Calu3 (cell line): ENCODE measurements at regions of chr6 and their contacts with region 1.

Region 1: DNA sequence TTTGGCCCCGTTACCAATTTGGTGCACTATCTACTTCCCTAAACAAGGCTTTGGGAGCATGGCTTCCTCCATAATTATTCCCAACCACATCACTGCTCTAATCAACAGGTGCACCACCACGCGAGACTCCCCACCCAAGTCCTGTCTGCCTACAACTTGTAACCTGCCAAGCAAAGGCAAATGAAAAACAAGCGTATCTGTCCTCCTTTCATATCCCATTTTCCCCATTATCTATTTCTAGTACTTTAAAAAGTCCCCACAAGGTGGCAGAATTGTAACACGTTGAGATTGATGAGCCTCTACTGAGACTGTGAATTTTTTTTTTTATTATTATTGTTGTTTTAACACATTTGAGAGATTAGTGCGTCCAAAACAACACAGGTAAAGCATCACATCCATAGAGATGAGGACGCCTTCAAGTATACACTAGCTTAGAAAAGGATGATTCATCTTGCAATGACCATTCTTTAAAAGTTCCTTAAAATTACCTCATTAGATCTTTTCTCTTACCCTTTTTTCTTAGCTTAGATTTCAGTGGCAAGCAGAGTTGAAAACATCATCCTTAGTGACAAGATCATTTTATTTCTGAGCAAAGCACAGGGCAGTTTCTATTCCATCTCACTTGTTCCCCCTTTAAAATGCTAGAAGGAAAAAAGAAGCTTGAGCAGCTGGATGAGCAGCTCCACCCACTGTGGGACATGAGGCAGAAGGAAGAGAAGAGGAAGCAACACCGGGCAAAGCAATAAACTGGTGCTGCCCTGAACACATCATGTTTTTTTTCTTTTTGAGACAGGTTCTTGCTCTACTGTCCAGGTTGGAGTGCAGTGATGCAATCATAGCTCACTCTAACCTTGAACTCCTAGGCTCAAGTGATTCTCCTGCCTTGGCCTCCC is 210.8 kb downstream of the ARHGAP18 start:
- DNase-seq: peak; percentile 43
- H3K4me3 Mint-ChIP-seq: peak overlapping the region; percentile 61
- H3K27ac Mint-ChIP-seq: peak overlapping the region; percentile 89
- H3K4me1 Mint-ChIP-seq: peaks cover 63% of the 10 kb centered on the region
- H3K27me3 Mint-ChIP-seq: no peaks in the 10 kb centered on the region
- CTCF ChIP-seq: peak; percentile 77

Region 2: DNA sequence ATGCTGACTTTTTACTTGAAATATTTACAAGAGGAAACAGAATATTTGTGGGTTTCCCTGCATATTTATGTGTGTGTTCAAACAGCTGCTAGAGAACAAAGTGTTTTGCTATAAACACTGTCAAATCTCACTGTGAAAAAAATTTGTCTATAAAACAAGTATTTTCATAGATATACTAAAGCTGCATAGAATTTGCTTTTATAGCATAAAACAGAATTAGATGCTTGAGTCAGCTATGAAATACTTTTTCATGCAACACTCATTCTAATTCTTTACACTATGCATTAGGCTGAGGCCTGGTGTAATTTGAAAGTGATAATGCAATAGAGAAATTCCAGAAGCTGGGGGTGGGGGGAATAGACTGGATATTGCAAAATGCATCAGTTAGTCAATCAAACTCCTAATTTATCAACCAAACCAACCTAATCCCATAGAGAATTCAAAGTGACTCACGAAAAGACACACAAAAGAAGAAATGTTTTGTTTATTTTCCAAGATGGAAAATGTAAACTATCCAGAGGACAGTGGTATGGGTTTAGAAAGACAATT is 468.1 kb before region 1 on chr6:
- CTCF ChIA-PET with region 1: no interaction called
- intact Hi-C with region 1: no loop called
- DNase-seq: no peak
- H3K4me3 Mint-ChIP-seq: no peak overlapping the region
- H3K27ac Mint-ChIP-seq: no peak overlapping the region
- H3K4me1 Mint-ChIP-seq: no peaks in the 10 kb centered on the region
- H3K27me3 Mint-ChIP-seq: no peaks in the 10 kb centered on the region
- CTCF ChIP-seq: no peak

Region 3: DNA sequence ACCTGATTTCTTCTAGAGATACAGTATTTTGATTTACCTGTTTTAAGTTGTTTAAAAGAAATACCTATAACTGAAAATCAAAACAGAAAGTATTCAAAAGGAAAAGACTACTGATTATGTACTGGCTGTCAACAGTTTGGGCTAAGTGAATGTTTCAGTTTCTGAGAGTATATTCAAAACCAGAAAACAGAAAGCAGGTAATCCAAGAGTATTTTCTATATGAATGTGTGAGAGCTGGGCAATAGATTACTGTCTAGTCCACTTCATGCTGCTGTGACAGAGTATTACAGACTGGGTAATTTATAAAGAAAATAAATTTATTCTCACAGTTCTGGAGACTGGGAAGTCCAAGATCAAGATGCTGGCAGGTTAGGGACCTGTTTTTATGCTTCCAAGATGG is 50.2 kb before region 1 on chr6:
- CTCF ChIA-PET with region 1: no interaction called
- intact Hi-C with region 1: no loop called
- DNase-seq: no peak
- H3K4me3 Mint-ChIP-seq: no peak overlapping the region
- H3K27ac Mint-ChIP-seq: no peak overlapping the region
- H3K4me1 Mint-ChIP-seq: peaks cover 7% of the 10 kb centered on the region
- H3K27me3 Mint-ChIP-seq: no peaks in the 10 kb centered on the region
- CTCF ChIP-seq: no peak

Region 4: DNA sequence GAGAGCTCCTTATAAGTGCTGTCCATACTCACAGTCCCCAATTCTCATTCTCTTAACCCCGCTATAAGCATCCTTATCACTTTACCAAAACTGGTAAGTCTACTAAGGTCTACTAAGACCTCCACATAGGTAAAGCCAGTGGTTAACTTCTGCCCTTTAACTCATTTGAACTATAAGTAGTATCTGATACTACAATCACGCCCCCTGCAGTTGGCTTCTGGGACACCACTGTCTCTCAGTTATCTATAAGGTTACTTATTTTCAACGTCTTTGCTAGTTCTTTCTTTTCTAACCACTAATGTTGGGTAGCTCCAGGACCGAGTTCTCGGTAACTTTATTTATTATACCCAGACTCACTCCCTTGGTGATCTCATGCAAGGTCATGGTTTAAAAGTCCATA is 68.2 kb after region 1 on chr6:
- CTCF ChIA-PET with region 1: no interaction called
- intact Hi-C with region 1: loop called (anchors 2 kb)
- DNase-seq: peak; percentile 35
- H3K4me3 Mint-ChIP-seq: no peak overlapping the region
- H3K27ac Mint-ChIP-seq: no peak overlapping the region
- H3K4me1 Mint-ChIP-seq: peaks cover 11% of the 10 kb centered on the region
- H3K27me3 Mint-ChIP-seq: no peaks in the 10 kb centered on the region
- CTCF ChIP-seq: peak; percentile 34

Region 5: DNA sequence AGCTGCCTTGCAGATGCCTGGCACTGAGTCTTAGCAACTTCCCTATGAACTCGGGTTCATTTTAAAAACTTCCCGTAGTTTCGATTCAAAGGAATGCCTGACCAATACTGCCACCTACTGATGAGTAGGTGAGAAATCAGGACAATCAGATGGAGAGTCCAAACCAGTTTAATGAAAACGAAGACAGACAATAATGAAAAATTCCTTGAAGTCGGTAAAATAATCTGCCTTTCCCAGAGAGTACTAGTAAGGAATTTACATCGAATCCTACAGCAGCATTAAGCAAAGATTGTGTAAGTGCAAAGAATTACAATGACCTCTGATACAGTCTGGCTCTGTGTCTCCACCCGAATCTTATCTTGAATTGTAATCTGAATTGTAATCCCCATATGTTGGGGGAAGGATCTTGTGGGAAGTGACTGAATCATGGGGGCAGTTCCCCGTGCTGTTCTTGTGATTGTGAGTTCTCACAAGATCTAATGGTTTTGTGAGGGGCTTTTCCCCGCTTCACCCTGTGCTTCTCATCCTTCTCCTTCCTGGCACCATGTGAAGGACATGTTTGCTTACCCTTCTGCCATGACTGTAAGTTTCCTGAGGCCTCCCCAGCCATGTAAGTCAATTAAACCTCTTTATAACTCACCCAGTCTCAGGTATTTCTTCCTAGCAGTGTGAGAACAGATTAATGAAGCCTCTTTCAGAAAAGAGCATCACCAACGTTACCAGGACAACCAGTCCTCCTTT is 76.4 kb after region 1 on chr6:
- CTCF ChIA-PET with region 1: interaction called, 7 read pairs
- intact Hi-C with region 1: loop called (anchors 1 kb)
- DNase-seq: peak; percentile 15
- H3K4me3 Mint-ChIP-seq: no peak overlapping the region
- H3K27ac Mint-ChIP-seq: peak overlapping the region; percentile 39
- H3K4me1 Mint-ChIP-seq: peaks cover 13% of the 10 kb centered on the region
- H3K27me3 Mint-ChIP-seq: no peaks in the 10 kb centered on the region
- CTCF ChIP-seq: peak; percentile 72

Region 6: GRCh38 chr6:130012728-130013127 is 513.5 kb after region 1 on chr6:
- CTCF ChIA-PET with region 1: no interaction called
- intact Hi-C with region 1: no loop called
- DNase-seq: no peak
- H3K4me3 Mint-ChIP-seq: no peak overlapping the region
- H3K27ac Mint-ChIP-seq: no peak overlapping the region
- H3K4me1 Mint-ChIP-seq: no peaks in the 10 kb centered on the region
- H3K27me3 Mint-ChIP-seq: no peaks in the 10 kb centered on the region
- CTCF ChIP-seq: no peak